Heart right ventricle (tissue), 16 donors: ENCODE measurements at regions of chr3 and their contacts with region 1.

Region 1: GRCh38 chr3:114827495-114827894 is 319.6 kb downstream of the ZBTB20 start:
- DNase-seq: peak in 1 of 2 donors; percentile 24
- ATAC-seq: peak in 7 of 8 donors; percentile 62 to 81 (median 76)
- H3K4me3 ChIP-seq: no peak overlapping the region
- H3K27ac ChIP-seq: no peak overlapping the region
- H3K4me1 ChIP-seq: peaks cover 0 to 7% (median 0%) of the 10 kb centered on the region in 9 donors
- H3K27me3 ChIP-seq: no peaks in the 10 kb centered on the region
- CTCF ChIP-seq: peak in 8 of 9 donors; percentile 47 to 82 (median 73)

Region 2: DNA sequence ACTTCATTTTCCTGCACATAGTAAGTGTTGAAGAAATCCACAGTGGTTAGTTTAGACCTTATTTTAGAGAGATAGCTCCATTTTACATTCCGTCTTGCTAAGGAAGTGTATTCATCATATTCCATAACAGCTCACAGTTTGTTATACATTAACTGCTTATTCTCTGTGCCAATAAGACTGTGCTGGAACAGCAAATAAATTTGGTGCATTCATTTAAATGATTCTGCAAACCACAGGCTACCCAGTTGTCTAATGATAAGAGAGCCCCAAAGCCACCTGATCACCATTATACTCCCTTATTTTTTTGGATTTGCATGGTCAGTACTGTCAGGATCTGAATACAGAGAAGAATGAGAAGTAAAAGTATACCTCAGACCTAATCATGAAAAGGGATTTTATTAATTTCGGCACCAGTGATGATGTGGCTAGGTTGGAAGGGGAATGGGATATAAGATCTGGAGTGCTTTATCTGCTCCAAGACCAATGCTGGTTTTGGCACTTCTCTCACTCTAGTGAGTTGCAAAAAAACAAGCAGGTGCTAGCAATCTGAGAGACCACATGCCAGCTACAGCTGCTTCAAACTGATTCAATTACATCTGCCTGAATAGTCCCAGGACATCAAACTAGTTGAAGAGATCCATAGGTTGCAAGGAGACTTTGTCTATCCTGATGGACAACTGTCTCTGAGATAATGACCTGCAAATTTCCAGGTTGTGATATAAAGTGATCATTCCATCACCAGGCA is 64.8 kb after region 1 on chr3:
- intact Hi-C with region 1: no loop called
- DNase-seq: no peak
- ATAC-seq: peak in 2 of 8 donors; percentile 34 to 37
- H3K4me3 ChIP-seq: no peak overlapping the region
- H3K27ac ChIP-seq: peak overlapping the region in 1 of 10 donors; percentile 13
- H3K4me1 ChIP-seq: peaks cover 0 to 10% (median 0%) of the 10 kb centered on the region in 9 donors
- H3K27me3 ChIP-seq: no peaks in the 10 kb centered on the region
- CTCF ChIP-seq: no peak

Region 3: GRCh38 chr3:115085197-115085865 is 257.8 kb after region 1 on chr3:
- intact Hi-C with region 1: loop called in 4 of 10 experiments (anchors 5 to 10 kb)
- DNase-seq: no peak
- ATAC-seq: peak in 6 of 8 donors; percentile 38 to 69 (median 56)
- H3K4me3 ChIP-seq: no peak overlapping the region
- H3K27ac ChIP-seq: peak overlapping the region in 3 of 10 donors; percentile 2 to 33 (median 14)
- H3K4me1 ChIP-seq: peaks cover 0 to 79% (median 48%) of the 10 kb centered on the region in 9 donors
- H3K27me3 ChIP-seq: no peaks in the 10 kb centered on the region
- CTCF ChIP-seq: peak in 5 of 9 donors; percentile 11 to 28 (median 16)

Region 4: DNA sequence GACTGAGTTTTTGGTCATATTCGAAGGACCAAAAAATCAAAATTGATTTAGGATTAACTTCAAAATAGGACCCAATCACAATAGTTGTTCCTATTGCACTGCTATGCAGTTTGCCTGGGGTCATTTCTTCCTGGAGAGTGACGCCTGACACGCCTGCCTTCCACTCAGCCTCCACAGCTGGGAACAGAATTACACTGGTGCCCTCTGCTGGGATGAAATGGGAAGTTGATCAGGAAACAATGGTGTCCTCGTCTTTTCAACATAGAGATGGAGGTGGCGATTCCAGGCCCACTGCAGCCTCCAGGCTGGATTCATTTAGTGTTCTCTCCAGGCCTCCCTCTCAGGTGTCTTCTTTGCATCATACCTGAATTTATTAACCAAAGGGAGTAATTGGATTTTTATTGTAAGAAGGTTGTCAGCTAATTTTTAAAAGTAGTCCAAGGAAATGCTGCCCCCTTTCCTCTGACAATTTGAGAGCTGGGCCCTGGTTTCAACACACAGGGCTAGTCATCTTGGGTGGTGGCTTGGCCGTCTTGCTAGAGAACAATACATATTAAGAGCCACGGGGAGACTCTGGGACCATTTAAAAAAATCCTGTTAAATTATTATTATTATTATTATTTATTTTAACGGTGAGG is 865.5 kb after region 1 on chr3:
- intact Hi-C with region 1: loop called in 1 of 10 experiments (anchors 5 kb)
- DNase-seq: peak; percentile 39 to 80
- ATAC-seq: peak; percentile 87 to 98 (median 95)
- H3K4me3 ChIP-seq: no peak overlapping the region
- H3K27ac ChIP-seq: peak overlapping the region in 1 of 10 donors; percentile 59
- H3K4me1 ChIP-seq: peaks cover 0 to 10% (median 0%) of the 10 kb centered on the region in 9 donors
- H3K27me3 ChIP-seq: no peaks in the 10 kb centered on the region
- CTCF ChIP-seq: peak; percentile 65 to 90 (median 82)

Region 5: GRCh38 chr3:115783938-115784738 is 956.6 kb after region 1 on chr3:
- intact Hi-C with region 1: loop called in 1 of 10 experiments (anchors 10 kb)
- DNase-seq: peak; percentile 90 to 93
- ATAC-seq: peak; percentile 95 to 98 (median 96)
- H3K4me3 ChIP-seq: peak overlapping the region; percentile 32 to 86 (median 70)
- H3K27ac ChIP-seq: peak overlapping the region; percentile 74 to 97 (median 95)
- H3K4me1 ChIP-seq: peaks cover 0 to 18% (median 8%) of the 10 kb centered on the region in 9 donors
- H3K27me3 ChIP-seq: peaks cover 0 to 10% (median 0%) of the 10 kb centered on the region in 7 donors
- CTCF ChIP-seq: peak; percentile 94 to 99 (median 97)